Activated CD4-positive, alpha-beta memory T cell treated with anti-CD3 and anti-CD28 coated beads for 36 hours (primary cell): ENCODE measurements at regions of chr3 and their contacts with region 1.

Region 1: GRCh38 chr3:194769020-194769643 is 83.4 kb downstream of the FAM43A start:
- DNase-seq: peak; percentile 96
- H3K4me3 Mint-ChIP-seq: peak overlapping the region; percentile 68
- H3K27ac Mint-ChIP-seq: peak overlapping the region; percentile 70
- H3K4me1 Mint-ChIP-seq: peaks cover 19% of the 10 kb centered on the region
- H3K27me3 Mint-ChIP-seq: peaks cover 5% of the 10 kb centered on the region

Region 2: DNA sequence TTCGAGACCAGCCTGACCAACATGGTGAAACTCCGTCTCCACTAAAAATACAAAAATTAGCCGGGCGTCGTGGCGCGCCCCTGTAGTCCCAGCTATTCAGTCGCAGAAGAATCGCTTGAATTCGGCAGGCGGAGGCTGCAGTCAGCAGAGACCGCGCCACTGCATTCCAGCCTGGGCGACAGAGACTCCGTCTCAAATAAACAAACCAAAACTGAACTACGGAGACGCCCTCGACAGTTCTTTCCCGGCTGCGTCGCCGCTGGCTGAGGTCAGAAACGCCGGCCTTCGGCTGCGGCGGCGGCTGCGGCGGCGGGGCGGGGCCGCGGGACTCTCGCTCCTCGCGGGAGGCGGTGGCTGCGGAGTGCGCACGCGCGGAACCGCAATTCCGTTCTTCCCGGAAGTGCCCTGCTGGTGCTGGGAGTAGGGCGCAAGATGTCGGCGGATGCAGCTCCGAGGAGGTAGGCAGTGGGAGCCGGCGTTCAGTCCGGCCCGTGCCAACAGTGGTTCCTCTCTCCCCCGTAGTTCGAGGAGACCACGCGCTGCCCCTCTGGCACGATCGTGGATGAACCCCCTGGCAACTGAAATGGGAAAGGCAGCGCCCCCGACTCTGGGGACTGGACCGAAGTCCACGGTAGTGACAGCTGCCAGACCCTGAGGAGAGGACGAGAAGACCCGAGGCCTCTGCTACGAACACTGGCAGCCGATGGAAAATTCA is 185.4 kb before region 1 on chr3:
- CTCF ChIA-PET with region 1: no interaction called
- POLR2A ChIA-PET with region 1: no interaction called
- intact Hi-C with region 1: no loop called
- DNase-seq: peak; percentile 96
- H3K4me3 Mint-ChIP-seq: peak overlapping the region; percentile 96
- H3K27ac Mint-ChIP-seq: peak overlapping the region; percentile 97
- H3K4me1 Mint-ChIP-seq: peaks cover 27% of the 10 kb centered on the region
- H3K27me3 Mint-ChIP-seq: no peaks in the 10 kb centered on the region

Region 3: DNA sequence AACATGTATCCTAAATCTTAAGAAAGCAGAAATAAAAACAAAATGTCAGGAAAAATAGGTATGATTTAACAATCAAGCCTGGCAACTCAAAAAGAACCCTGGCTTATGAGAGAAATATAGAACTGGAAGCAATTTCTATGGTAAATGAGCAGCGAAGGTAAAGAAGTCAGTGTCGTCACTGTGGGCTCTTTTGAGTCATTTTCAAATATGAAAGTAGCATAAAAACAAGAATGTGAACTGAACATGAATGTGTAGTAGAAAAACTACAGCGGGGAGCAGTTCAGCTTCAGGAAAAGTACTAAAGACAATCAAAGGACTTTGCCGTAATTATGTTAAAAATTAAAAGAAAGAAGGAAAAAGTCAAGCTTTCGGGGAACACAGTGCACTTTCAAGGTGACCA is 114.7 kb before region 1 on chr3:
- CTCF ChIA-PET with region 1: no interaction called
- POLR2A ChIA-PET with region 1: no interaction called
- intact Hi-C with region 1: no loop called
- DNase-seq: no peak
- H3K4me3 Mint-ChIP-seq: peak overlapping the region; percentile 11
- H3K27ac Mint-ChIP-seq: peak overlapping the region; percentile 83
- H3K4me1 Mint-ChIP-seq: peaks cover 21% of the 10 kb centered on the region
- H3K27me3 Mint-ChIP-seq: no peaks in the 10 kb centered on the region

Region 4: DNA sequence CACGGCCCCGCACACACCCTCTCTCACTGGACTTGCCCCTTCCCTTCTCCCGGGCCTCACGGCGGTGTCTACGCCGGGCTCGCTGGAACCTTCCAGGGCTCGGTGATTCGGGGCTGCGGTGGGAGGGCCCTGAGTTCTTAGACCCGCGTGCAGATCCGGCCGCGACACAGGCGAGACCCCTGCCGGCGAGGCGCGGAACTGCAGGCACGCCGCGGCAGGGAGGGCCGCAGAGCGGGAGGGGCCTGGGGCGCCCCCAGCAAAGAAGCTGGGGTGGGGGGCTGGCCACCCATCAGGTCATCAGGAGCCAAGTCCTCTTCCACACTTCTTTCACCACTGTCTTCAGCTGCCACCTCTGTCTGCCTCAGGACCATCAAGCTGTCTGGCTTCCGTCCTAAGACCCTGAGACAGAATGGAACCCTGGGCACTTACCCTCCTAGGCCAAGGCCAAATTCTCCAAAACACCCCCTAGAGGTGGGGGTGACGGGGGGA is 337.3 kb after region 1 on chr3:
- CTCF ChIA-PET with region 1: no interaction called
- POLR2A ChIA-PET with region 1: no interaction called
- intact Hi-C with region 1: loop called (anchors 10 kb)
- DNase-seq: peak; percentile 71
- H3K4me3 Mint-ChIP-seq: no peak overlapping the region
- H3K27ac Mint-ChIP-seq: no peak overlapping the region
- H3K4me1 Mint-ChIP-seq: peaks cover 4% of the 10 kb centered on the region
- H3K27me3 Mint-ChIP-seq: no peaks in the 10 kb centered on the region

Region 5: DNA sequence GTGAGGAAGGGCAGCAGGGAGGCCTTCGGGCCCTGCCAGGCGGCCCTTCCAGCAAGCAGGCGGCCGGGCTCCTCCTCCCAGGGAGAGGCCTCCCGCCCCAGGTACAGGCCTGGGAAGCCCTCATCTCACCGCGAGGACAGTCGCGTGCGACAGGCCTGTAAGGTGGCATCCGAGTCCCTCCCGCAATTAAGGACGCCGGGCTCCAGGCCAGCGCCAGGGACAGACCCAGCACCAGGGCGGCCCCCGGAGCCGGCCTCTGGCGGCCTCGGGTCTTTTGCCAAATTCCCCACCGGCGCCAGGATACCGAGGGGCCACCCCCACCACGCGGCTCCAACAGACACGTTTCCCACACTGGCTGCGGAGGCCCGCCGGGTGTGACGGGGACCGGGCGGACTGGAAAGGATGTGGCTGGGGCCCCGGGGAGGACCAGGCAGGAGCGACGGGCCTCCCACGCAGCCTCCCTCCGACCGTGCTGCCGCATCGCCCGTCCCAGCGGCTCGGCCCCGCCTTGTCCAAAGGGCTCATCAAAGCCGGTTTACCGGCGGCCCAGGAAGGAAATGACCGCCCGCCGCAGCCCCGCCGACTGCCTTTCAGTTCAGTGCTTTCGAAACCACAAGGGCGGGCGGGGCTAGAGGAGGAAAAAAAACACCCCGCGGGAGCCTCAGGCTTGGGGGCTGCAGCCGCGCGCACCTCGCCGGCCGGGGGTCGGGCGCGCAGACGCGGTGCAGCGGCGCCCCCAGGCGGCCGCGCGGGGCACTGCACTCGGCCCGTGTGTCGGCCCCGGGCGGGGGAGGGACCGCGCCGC is 490.5 kb after region 1 on chr3:
- CTCF ChIA-PET with region 1: no interaction called
- POLR2A ChIA-PET with region 1: no interaction called
- intact Hi-C with region 1: loop called (anchors 10 kb)
- DNase-seq: peak; percentile 90
- H3K4me3 Mint-ChIP-seq: peak overlapping the region; percentile 57
- H3K27ac Mint-ChIP-seq: peak overlapping the region; percentile 42
- H3K4me1 Mint-ChIP-seq: peaks cover 14% of the 10 kb centered on the region
- H3K27me3 Mint-ChIP-seq: no peaks in the 10 kb centered on the region

Region 6: DNA sequence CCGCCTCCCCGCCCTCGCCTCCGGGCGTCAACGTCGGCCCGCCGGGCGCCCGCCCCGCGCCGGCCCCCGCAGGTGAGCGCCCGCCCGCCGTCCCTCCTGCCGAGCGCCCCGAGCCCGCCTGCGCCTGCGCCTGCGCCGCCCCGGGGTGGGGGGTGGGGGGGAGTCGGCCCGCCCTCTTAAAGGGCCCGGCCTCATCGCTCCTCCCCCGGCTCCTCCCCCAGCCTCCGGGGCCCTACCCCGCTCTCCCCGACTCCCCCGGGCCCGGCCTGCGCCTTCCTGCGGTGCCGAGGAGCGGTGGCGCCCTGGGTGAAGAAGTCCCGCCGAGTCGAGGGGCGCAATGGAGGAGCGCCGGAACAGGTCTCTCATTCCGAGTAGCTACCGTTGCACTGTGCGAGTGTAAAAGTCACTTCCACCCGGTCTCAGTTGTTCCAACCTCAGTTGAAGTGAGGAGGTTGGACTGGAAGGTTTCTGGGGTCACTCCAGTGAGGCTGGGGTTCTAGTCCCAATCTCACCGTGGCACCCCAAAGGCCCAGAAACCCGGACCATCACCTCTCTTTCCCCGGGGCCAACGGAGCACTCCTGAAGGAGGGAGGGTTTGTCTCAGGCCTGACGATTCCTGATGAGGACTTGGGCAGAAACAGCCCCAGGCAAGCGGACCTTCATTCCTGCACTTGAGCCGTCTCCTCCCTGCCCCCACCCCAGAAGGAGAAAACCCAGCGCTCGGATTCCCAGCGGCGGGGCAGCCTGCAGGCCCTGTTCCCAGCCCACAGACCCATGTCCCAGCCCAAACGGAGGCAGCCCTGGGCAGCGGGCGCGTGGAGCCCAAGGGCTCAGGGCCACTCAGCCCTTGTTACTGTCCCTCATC is 1140.7 kb after region 1 on chr3:
- CTCF ChIA-PET with region 1: no interaction called
- POLR2A ChIA-PET with region 1: no interaction called
- intact Hi-C with region 1: loop called (anchors 2 kb)
- DNase-seq: peak; percentile 91
- H3K4me3 Mint-ChIP-seq: peak overlapping the region; percentile 66
- H3K27ac Mint-ChIP-seq: peak overlapping the region; percentile 54
- H3K4me1 Mint-ChIP-seq: peaks cover 28% of the 10 kb centered on the region
- H3K27me3 Mint-ChIP-seq: no peaks in the 10 kb centered on the region